ENCODE measurements at regions of chr11 and their contacts with region 1.

Region 1: GRCh38 chr11:82900277-82901164 is at the start of gene PRCP:
- DNase-seq: peak; percentile 97
- H3K4me3 Mint-ChIP-seq: peak within 1 kb of the TSS; percentile 99
- H3K27ac Mint-ChIP-seq: peak within 1 kb of the TSS; percentile 99
- H3K4me1 Mint-ChIP-seq: peaks cover 48% of the 10 kb centered on the region
- H3K27me3 Mint-ChIP-seq: no peaks in the 10 kb centered on the region
- total RNA-seq, gene PRCP: 23.0 to 23.3 TPM

Region 2: DNA sequence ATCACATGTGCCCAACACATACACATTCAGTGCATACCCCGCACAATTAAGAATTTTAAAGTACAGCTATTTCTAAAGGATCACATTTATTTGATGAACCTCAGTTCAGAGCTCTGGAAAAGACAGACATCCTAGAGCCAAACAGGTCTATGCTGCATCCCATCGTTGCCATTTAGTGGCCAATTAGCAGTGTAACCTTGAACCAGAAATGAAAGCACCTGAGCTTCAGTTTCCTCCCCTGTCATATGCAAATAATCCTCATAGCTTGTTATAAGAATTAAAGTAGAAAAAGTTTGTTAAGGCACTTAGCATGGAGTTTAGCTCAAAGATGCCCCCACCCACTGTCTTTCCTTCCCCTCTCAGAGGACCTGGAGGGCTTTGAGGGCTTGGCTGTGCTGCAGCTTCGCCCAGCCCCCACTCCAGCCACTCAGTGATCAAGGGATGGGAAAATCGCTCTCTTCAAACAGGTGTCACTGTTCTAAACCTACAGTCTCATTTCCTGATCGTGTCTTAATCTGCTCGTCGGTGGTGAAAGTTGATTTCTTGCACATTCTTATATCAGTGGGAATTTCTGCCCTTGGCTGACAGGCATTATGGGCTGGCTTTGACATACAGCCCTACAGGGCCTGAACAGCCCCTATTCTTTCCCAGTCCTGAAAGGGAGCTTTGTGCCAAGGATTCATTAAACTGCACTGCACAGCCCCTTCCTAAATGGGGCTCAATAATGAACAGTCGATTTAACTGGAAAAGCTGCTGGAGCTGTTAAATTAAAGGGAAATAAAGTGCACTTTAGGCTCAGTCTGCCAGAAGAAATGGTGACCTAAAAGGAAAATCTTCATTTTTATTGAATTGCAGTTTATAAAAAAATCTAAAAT is 143.5 kb before region 1 on chr11:
- CTCF ChIA-PET with region 1: no interaction called
- intact Hi-C with region 1: loop called (anchors 2 kb)
- DNase-seq: peak; percentile 21
- H3K4me3 Mint-ChIP-seq: peak overlapping the region; percentile 19
- H3K27ac Mint-ChIP-seq: no peak overlapping the region
- H3K4me1 Mint-ChIP-seq: peaks cover 26% of the 10 kb centered on the region
- H3K27me3 Mint-ChIP-seq: no peaks in the 10 kb centered on the region

Region 3: GRCh38 chr11:82936261-82936660 is 35.7 kb after region 1 on chr11:
- CTCF ChIA-PET with region 1: no interaction called
- intact Hi-C with region 1: no loop called
- DNase-seq: no peak
- H3K4me3 Mint-ChIP-seq: no peak overlapping the region
- H3K27ac Mint-ChIP-seq: no peak overlapping the region
- H3K4me1 Mint-ChIP-seq: peaks cover 30% of the 10 kb centered on the region
- H3K27me3 Mint-ChIP-seq: no peaks in the 10 kb centered on the region

Region 4: GRCh38 chr11:82969811-82970210 is 69.3 kb after region 1 on chr11:
- CTCF ChIA-PET with region 1: interaction called, 4 read pairs
- intact Hi-C with region 1: loop called (anchors 2 kb)
- DNase-seq: peak; percentile 41
- H3K4me3 Mint-ChIP-seq: peak overlapping the region; percentile 47
- H3K27ac Mint-ChIP-seq: peak overlapping the region; percentile 59
- H3K4me1 Mint-ChIP-seq: peaks cover 50% of the 10 kb centered on the region
- H3K27me3 Mint-ChIP-seq: no peaks in the 10 kb centered on the region

Region 5: GRCh38 chr11:83051760-83052671 is 151.5 kb after region 1 on chr11:
- CTCF ChIA-PET with region 1: no interaction called
- intact Hi-C with region 1: no loop called
- DNase-seq: no peak
- H3K4me3 Mint-ChIP-seq: no peak overlapping the region
- H3K27ac Mint-ChIP-seq: no peak overlapping the region
- H3K4me1 Mint-ChIP-seq: peaks cover 44% of the 10 kb centered on the region
- H3K27me3 Mint-ChIP-seq: no peaks in the 10 kb centered on the region

Region 6: DNA sequence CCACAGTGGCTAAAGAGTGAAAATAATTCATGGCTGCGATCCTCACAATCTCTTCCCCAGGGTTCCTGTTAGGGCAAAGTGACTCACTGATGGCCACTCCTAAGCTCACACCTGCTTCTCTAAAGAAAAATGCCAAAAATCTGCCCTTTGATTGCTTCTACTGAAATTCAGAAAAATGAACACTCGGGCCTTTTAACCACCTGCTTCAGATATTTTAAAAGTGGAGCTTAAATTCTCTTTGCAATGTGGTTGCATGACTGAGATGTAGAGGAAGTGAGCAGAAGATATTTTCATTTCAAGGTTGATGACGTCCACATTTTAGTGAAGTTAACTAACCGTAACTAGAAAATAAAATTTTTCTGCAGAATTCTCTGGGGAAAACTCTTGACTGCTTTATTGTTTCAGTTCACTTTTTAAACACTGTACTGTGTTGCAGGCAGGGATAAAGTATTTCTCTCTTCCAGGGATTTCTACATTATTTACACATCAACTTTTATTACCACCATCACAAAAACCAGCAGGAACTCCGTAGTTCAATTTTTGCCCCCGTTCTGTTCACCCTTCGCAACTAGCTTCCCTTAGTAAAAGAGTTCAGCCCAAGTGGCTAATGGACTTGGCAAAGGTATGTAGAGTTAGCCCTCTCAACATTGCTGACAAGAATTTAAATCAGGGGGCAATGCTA is 162.7 kb after region 1 on chr11:
- CTCF ChIA-PET with region 1: no interaction called
- intact Hi-C with region 1: loop called (anchors 2 kb)
- DNase-seq: no peak
- H3K4me3 Mint-ChIP-seq: peak overlapping the region; percentile 78
- H3K27ac Mint-ChIP-seq: peak overlapping the region; percentile 93
- H3K4me1 Mint-ChIP-seq: peaks cover 64% of the 10 kb centered on the region
- H3K27me3 Mint-ChIP-seq: no peaks in the 10 kb centered on the region

Region 7: GRCh38 chr11:83193315-83194280 is 293.1 kb after region 1 on chr11 and contains the start of gene ANKRD42:
- CTCF ChIA-PET with region 1: interaction called, 4 read pairs
- intact Hi-C with region 1: loop called (anchors 1 kb)
- DNase-seq: peak; percentile 90
- H3K4me3 Mint-ChIP-seq: peak within 1 kb of the TSS; percentile 95
- H3K27ac Mint-ChIP-seq: peak within 1 kb of the TSS; percentile 95
- H3K4me1 Mint-ChIP-seq: peaks cover 44% of the 10 kb centered on the region
- H3K27me3 Mint-ChIP-seq: no peaks in the 10 kb centered on the region
- total RNA-seq, gene ANKRD42: 2.3 to 2.7 TPM

Region 8: DNA sequence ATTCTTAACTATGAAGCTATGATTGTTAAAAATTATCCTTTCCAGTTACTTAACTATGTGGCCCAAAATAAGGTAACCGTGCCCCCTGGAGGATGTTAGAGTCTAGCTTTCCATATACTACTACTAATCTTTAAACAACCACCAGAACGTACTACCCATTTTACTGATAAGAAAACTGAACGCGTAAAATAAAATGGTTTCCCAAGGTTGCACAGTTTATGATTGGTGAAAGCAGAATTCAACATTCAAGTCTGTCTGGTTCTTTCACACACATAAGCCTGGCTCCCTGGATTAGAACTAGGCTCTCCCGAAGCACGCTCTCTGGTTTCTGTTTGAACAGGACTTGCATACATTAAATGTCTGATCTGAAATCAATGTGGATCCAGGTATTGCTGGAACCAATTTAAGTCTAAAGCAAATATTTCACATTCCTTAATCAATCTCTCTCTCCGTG is 823.5 kb after region 1 on chr11:
- CTCF ChIA-PET with region 1: no interaction called
- intact Hi-C with region 1: loop called (anchors 10 kb)
- DNase-seq: peak; percentile 49
- H3K4me3 Mint-ChIP-seq: peak overlapping the region; percentile 45
- H3K27ac Mint-ChIP-seq: no peak overlapping the region
- H3K4me1 Mint-ChIP-seq: peaks cover 8% of the 10 kb centered on the region
- H3K27me3 Mint-ChIP-seq: peaks cover 9% of the 10 kb centered on the region

Measured in activated naive CD4-positive, alpha-beta T cell treated with anti-CD3 and anti-CD28 coated beads for 36 hours (primary cell).